PC-3 (cell line): ENCODE measurements at regions of chr12 and their contacts with region 1.

Region 1: DNA sequence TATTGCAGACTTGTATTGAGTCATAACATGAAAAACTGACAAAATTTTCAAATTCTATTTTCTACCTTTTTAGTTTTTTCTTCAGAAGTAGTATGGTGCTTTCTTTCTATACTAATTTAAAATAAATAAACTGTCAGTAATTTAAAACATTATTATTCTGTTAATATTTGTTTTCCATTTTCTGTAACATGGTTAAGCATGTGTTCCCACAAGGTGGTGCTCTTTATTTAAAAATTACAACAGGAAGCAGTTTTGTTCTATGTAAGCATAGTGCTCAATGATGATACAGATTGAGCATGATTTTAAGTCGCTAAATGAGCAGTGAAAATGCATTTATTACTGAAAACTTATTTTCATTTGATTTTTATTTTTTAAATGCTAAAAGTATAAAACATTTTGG is 114.6 kb downstream of the PPFIA2 start:
- DNase-seq: peak; percentile 52
- ATAC-seq: 0 out of 2 replicates have a peak, but pooled peaks have one; percentile 31
- H3K4me3 ChIP-seq: no peak overlapping the region
- H3K27ac ChIP-seq: no peak overlapping the region
- H3K4me1 ChIP-seq: no peaks in the 10 kb centered on the region
- H3K27me3 ChIP-seq: no peaks in the 10 kb centered on the region
- CTCF ChIP-seq: peak; percentile 61

Region 2: DNA sequence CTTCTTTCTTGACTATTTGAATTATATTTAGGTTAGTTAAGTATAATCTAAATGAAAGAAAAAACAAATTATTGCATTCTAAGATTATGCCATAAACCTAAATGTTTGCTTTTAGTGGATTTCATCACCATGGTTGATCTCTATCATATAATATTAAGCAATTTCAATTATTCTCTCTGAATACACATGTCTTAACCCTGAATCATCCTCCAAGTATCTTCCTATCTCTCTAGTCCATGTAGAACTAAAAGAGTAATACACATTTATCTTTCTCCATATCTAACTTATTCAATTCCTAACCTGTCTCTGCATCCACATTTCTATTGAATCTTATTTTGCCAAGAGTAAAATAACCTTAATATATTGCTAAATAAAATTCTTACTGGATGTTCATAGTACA is 55.1 kb after region 1 on chr12:
- CTCF ChIA-PET with region 1: no interaction called
- POLR2A ChIA-PET with region 1: no interaction called
- intact Hi-C with region 1: no loop called
- DNase-seq: no peak
- ATAC-seq: no peak
- H3K4me3 ChIP-seq: no peak overlapping the region
- H3K27ac ChIP-seq: no peak overlapping the region
- H3K4me1 ChIP-seq: no peaks in the 10 kb centered on the region
- H3K27me3 ChIP-seq: no peaks in the 10 kb centered on the region
- CTCF ChIP-seq: no peak

Region 3: GRCh38 chr12:81797100-81797499 is 152.6 kb after region 1 on chr12:
- CTCF ChIA-PET with region 1: no interaction called
- POLR2A ChIA-PET with region 1: no interaction called
- intact Hi-C with region 1: loop called (anchors 2 kb)
- DNase-seq: peak; percentile 36
- ATAC-seq: peak; percentile 33; the same call in 1 of the 2 replicates
- H3K4me3 ChIP-seq: no peak overlapping the region
- H3K27ac ChIP-seq: no peak overlapping the region
- H3K4me1 ChIP-seq: no peaks in the 10 kb centered on the region
- H3K27me3 ChIP-seq: no peaks in the 10 kb centered on the region; the same call in 1 of the 2 replicates
- CTCF ChIP-seq: peak; percentile 58

Region 4: GRCh38 chr12:82326905-82327503 is 682.5 kb after region 1 on chr12:
- CTCF ChIA-PET with region 1: no interaction called
- POLR2A ChIA-PET with region 1: no interaction called
- intact Hi-C with region 1: loop called (anchors 1 kb)
- DNase-seq: peak; percentile 52
- ATAC-seq: no peak
- H3K4me3 ChIP-seq: no peak overlapping the region
- H3K27ac ChIP-seq: no peak overlapping the region
- H3K4me1 ChIP-seq: no peaks in the 10 kb centered on the region
- H3K27me3 ChIP-seq: no peaks in the 10 kb centered on the region
- CTCF ChIP-seq: peak; percentile 69

Region 5: GRCh38 chr12:82358200-82359114 is 714.0 kb after region 1 on chr12 and contains the starts of genes CCDC59 and METTL25:
- CTCF ChIA-PET with region 1: no interaction called
- POLR2A ChIA-PET with region 1: no interaction called
- intact Hi-C with region 1: loop called (anchors 1 kb)
- DNase-seq: peak; percentile 97
- ATAC-seq: peak; percentile 94
- H3K4me3 ChIP-seq: peak within 1 kb of the TSS; percentile 100
- H3K27ac ChIP-seq: peak within 1 kb of the TSS; percentile 83
- H3K4me1 ChIP-seq: peaks cover 16% of the 10 kb centered on the region
- H3K27me3 ChIP-seq: no peaks in the 10 kb centered on the region
- CTCF ChIP-seq: peak; percentile 96
- total RNA-seq, gene CCDC59: 53.0 and 70.1 TPM in 2 replicates
- total RNA-seq, gene METTL25: 5.1 and 7.9 TPM in 2 replicates